ENCODE measurements at regions of chr9 and their contacts with region 1.

Region 1: DNA sequence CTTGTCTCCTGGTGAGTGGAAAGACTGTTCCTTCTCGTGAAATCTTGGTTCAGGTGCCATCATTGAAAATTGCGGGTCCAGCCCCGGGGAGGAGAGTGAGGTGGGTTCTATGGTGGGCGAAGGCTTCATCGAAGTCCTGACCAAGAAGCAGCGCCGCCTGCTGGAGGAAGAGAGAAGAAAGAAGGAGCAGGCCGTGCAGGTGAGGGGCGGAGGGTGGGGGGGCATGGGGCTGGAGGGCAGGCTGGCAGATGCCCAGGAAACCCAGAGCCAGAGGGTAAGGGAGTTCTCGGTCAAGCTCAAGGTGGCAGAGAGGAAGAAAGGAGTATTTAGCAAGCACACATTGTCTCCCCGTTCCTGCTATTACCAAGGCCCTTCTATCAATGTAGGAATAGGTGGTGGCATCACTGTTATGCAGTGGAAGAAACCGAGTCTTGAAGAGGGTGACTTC is 24.3 kb upstream of the POMT1 start:
- DNase-seq: peak in 1 of 10 donors; percentile 28
- H3K4me3 ChIP-seq: no peak overlapping the region
- H3K27ac ChIP-seq: no peak overlapping the region
- H3K27me3 ChIP-seq: no peaks in the 10 kb centered on the region
- CTCF ChIP-seq: peak; percentile 14 to 71 (median 58)

Region 2: GRCh38 chr9:131349881-131350563 is 128.4 kb before region 1 on chr9:
- intact Hi-C with region 1: loop called in 1 of 2 experiments (anchors 5 kb)
- DNase-seq: peak; percentile 83 to 91 (median 87)
- H3K4me3 ChIP-seq: peak overlapping the region in 51 of 59 donors; percentile 0 to 60 (median 39)
- H3K27ac ChIP-seq: peak overlapping the region in 13 of 59 donors; percentile 8 to 71 (median 42)
- H3K27me3 ChIP-seq: no peaks in the 10 kb centered on the region
- CTCF ChIP-seq: peak; percentile 52 to 93 (median 86)

Region 3: GRCh38 chr9:131393622-131394463 is 84.6 kb before region 1 on chr9 and contains the start of gene PRRC2B:
- intact Hi-C with region 1: loop called (anchors 5 kb)
- DNase-seq: peak in 8 of 10 donors; percentile 55 to 86 (median 76)
- H3K4me3 ChIP-seq: peak within 1 kb of the TSS; percentile 45 to 81 (median 68)
- H3K27ac ChIP-seq: peak within 1 kb of the TSS; percentile 65 to 98 (median 93)
- H3K27me3 ChIP-seq: no peaks in the 10 kb centered on the region
- CTCF ChIP-seq: peak in 45 of 56 donors; percentile 6 to 81 (median 50)
- total RNA-seq, gene PRRC2B: 234 to 434 (median 347) TPM

Region 4: GRCh38 chr9:131590908-131591844 is 112.7 kb after region 1 on chr9:
- intact Hi-C with region 1: no loop called
- DNase-seq: peak; percentile 65 to 85 (median 76)
- H3K4me3 ChIP-seq: no peak overlapping the region
- H3K27ac ChIP-seq: peak overlapping the region in 7 of 59 donors; percentile 4 to 52 (median 25)
- H3K27me3 ChIP-seq: no peaks in the 10 kb centered on the region
- CTCF ChIP-seq: peak; percentile 50 to 95 (median 87)

Measured in dorsolateral prefrontal cortex (tissue), 120 donors.